ENCODE measurements at regions of chr5 and their contacts with region 1.

Region 1: DNA sequence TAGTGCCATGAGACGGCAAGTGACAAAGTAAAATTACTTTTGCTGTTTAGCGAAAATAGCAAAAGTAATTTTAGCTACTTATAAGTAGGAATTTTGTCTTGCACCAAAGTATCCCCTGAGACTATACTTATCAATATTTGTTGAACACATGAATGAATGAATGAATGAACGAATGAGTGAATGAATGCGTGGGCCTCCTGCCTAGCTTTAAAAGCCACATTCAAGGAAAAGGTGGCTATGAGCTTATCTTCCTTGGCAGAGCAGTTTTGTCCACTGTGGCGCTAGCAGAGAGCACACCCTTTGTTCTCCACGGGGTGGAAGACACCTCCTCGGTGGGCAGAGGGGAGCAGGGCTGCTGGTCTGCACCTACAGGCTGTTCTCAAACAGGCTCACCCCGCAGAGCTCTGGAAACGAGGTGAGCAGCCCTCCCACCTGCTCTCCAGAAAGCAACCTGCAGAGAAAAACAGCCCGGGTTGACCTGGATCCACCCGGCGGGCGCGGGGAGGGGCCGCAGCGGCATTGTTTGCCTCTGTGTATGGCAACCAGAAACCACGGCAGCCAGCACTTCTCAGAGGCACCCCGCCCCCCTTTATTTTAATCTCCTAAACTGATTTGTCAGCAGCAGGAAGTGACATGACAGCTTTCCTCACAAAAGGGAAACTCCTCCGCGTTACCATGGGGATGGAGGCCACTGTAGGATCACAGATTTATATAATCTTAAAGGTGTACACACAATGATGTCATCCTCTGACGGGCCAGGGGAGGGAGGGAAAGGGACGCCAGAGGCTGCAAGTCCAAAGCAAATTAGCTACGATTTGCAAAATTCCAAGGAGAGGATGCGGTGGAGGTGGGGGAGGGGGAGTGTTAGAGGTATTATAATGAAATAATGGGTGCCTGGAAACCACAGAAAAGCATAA is 5.9 kb downstream of the DUSP1 start:
- DNase-seq: peak; percentile 97 to 99
- H3K4me3 ChIP-seq: peak overlapping the region; percentile 52; the same call in 1 of the 2 replicates
- H3K27ac ChIP-seq: peak overlapping the region; percentile 59
- H3K4me1 ChIP-seq: peaks cover 31% of the 10 kb centered on the region
- H3K27me3 ChIP-seq: no peaks in the 10 kb centered on the region
- CTCF ChIP-seq: no peak

Region 2: GRCh38 chr5:172744123-172745104 is 20.7 kb before region 1 on chr5:
- CTCF ChIA-PET with region 1: interaction called, 3 read pairs
- POLR2A ChIA-PET with region 1: no interaction called
- intact Hi-C with region 1: loop called (anchors 1 kb)
- DNase-seq: peak; percentile 77 to 91
- H3K4me3 ChIP-seq: no peak overlapping the region
- H3K27ac ChIP-seq: peak overlapping the region; percentile 28; the same call in 1 of the 2 replicates
- H3K4me1 ChIP-seq: peaks cover 24% of the 10 kb centered on the region
- H3K27me3 ChIP-seq: no peaks in the 10 kb centered on the region
- CTCF ChIP-seq: no peak

Region 3: GRCh38 chr5:172788771-172789686 is 23.9 kb after region 1 on chr5:
- CTCF ChIA-PET with region 1: no interaction called
- POLR2A ChIA-PET with region 1: interaction called, 21 read pairs
- intact Hi-C with region 1: no loop called
- DNase-seq: no peak
- H3K4me3 ChIP-seq: no peak overlapping the region
- H3K27ac ChIP-seq: peak overlapping the region; percentile 13; the same call in 1 of the 2 replicates
- H3K4me1 ChIP-seq: peaks cover 25% of the 10 kb centered on the region
- H3K27me3 ChIP-seq: no peaks in the 10 kb centered on the region
- CTCF ChIP-seq: no peak

Region 4: DNA sequence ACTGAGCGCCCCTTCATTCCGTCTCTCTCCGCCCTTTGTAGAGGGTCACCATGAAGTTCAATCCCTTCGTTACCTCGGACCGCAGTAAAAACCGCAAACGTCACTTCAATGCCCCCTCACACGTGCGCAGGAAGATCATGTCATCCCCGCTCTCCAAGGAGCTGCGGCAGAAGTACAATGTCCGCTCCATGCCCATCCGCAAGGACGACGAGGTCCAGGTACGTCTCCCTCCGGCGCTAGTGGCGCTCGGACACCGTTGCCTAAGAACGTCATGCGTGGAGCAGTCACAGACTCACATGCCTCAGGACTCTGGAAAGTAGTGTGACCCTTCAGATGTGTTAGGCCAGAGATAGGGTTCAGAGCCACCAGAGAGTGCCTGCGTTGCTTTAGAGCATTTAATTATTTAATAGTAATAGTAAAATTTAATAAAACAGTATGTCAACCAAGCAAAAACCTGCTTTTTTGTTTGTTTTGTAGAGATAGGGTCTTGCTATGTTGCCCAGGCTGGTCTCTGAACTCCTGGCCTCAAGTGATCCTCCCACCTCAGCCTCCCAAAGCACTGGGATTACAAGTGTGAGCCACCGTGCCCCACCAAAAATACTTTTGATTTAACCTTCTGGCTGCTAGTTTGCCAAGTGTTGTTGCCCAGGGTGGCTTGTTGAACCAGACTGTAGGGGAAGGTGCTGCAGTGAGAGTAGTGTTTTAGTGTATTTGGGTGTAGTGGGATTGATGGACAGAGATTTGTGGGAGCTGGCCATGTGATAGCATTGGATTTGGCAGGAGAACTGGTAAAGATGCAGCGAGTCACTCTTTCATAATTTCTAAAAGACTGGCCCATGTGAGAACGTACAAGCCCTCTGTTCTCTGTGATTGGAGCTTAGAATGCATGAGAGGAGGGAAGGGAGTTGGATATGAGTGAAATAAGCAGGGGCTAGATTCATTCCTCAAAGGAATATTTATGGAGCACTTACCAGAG is 195.0 kb after region 1 on chr5:
- CTCF ChIA-PET with region 1: no interaction called
- POLR2A ChIA-PET with region 1: no interaction called
- intact Hi-C with region 1: no loop called
- DNase-seq: no peak
- H3K4me3 ChIP-seq: peak overlapping the region; percentile 99
- H3K27ac ChIP-seq: peak overlapping the region; percentile 72; the same call in 1 of the 2 replicates
- H3K4me1 ChIP-seq: peaks cover 14% of the 10 kb centered on the region
- H3K27me3 ChIP-seq: no peaks in the 10 kb centered on the region
- CTCF ChIP-seq: no peak